Heart right ventricle (tissue), 16 donors: ENCODE measurements at regions of chr13 and their contacts with region 1.

Region 1: DNA sequence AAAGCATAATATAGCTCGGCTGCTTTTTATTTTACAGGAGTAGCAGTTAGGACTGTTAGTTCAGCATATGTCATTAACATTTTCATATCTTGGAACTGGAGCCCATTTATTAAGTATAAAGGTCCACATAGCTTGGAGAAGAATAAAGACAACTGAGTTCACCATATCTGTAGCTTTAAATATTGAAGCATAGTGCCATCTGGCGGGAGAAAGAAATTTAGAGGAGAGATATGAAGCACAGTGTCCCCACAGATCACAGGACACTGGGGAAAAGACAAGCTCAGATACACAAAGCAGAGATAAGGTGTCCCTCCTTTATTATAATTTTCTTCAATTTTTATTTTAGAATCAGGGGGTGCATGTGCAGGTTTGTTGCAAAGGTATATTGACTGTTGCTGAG is 104.7 kb upstream of the FREM2 start:
- DNase-seq: peak in 1 of 2 donors; percentile 15
- ATAC-seq: peak in 5 of 8 donors; percentile 26 to 75 (median 60)
- H3K4me3 ChIP-seq: no peak overlapping the region
- H3K27ac ChIP-seq: no peak overlapping the region
- H3K4me1 ChIP-seq: no peaks in the 10 kb centered on the region
- H3K27me3 ChIP-seq: no peaks in the 10 kb centered on the region
- CTCF ChIP-seq: peak in 7 of 9 donors; percentile 16 to 56 (median 54)

Region 2: DNA sequence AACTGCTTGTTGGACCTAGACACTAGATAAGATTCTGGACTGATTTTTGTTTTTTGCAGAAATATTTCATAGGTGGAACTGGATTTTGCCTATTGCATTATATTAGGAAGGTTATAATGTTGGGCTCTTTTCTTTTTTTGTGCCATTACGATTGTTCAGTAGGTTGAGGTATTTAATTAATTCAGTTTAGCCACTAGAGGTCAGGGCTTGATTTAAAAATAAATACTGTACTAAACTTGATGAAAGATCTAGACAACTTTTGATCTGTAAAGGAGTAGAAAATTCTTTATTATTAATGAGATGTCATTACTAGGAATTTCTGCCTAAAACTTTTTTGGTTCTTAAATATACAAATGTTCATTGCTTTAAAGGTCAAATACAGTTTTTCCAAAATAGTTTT is 1507.4 kb before region 1 on chr13:
- intact Hi-C with region 1: loop called in 1 of 10 experiments (anchors 10 kb)
- DNase-seq: no peak
- ATAC-seq: peak in 2 of 8 donors; percentile 46 to 62
- H3K4me3 ChIP-seq: no peak overlapping the region
- H3K27ac ChIP-seq: no peak overlapping the region
- H3K4me1 ChIP-seq: no peaks in the 10 kb centered on the region
- H3K27me3 ChIP-seq: no peaks in the 10 kb centered on the region
- CTCF ChIP-seq: peak; percentile 15 to 61 (median 47)

Region 3: GRCh38 chr13:37640499-37640898 is 941.6 kb before region 1 on chr13:
- intact Hi-C with region 1: loop called in 1 of 10 experiments (anchors 5 kb)
- DNase-seq: no peak
- ATAC-seq: no peak
- H3K4me3 ChIP-seq: no peak overlapping the region
- H3K27ac ChIP-seq: no peak overlapping the region
- H3K4me1 ChIP-seq: peaks cover 0 to 6% (median 0%) of the 10 kb centered on the region in 9 donors
- H3K27me3 ChIP-seq: no peaks in the 10 kb centered on the region
- CTCF ChIP-seq: peak in 7 of 9 donors; percentile 16 to 59 (median 52)